ENCODE measurements at regions of chr19 and their contacts with region 1.

Region 1: GRCh38 chr19:18058208-18059030 is 28.3 kb downstream of the IL12RB1 start:
- DNase-seq: peak; percentile 63 to 86 (median 80)
- H3K4me3 ChIP-seq: peak overlapping the region; percentile 12
- H3K27ac ChIP-seq: no peak overlapping the region
- H3K4me1 ChIP-seq: no peaks in the 10 kb centered on the region
- H3K27me3 ChIP-seq: no peaks in the 10 kb centered on the region
- CTCF ChIP-seq: peak; percentile 83 to 92 (median 87)
- EP300 ChIP-seq: no peak
- POLR2A ChIP-seq: no peak

Region 2: GRCh38 chr19:18007044-18007916 is 51.1 kb before region 1 on chr19:
- intact Hi-C with region 1: loop called in 3 of 4 experiments (anchors 2 kb)
- DNase-seq: peak; percentile 73 to 90 (median 79)
- H3K4me3 ChIP-seq: peak overlapping the region; percentile 43
- H3K27ac ChIP-seq: peak overlapping the region; percentile 17 to 60
- H3K4me1 ChIP-seq: peaks cover 5% of the 10 kb centered on the region
- H3K27me3 ChIP-seq: no peaks in the 10 kb centered on the region
- CTCF ChIP-seq: peak; percentile 91 to 94 (median 93)
- EP300 ChIP-seq: no peak
- POLR2A ChIP-seq: no peak

Region 3: GRCh38 chr19:18017275-18018083 is 40.9 kb before region 1 on chr19:
- intact Hi-C with region 1: loop called in 1 of 4 experiments (anchors 5 kb)
- DNase-seq: no peak
- H3K4me3 ChIP-seq: no peak overlapping the region
- H3K27ac ChIP-seq: no peak overlapping the region
- H3K4me1 ChIP-seq: peaks cover 7% of the 10 kb centered on the region
- H3K27me3 ChIP-seq: no peaks in the 10 kb centered on the region
- CTCF ChIP-seq: no peak
- EP300 ChIP-seq: no peak
- POLR2A ChIP-seq: no peak

Region 4: GRCh38 chr19:18043676-18044075 is 14.7 kb before region 1 on chr19:
- intact Hi-C with region 1: no loop called
- DNase-seq: no peak
- H3K4me3 ChIP-seq: no peak overlapping the region
- H3K27ac ChIP-seq: no peak overlapping the region
- H3K4me1 ChIP-seq: no peaks in the 10 kb centered on the region
- H3K27me3 ChIP-seq: no peaks in the 10 kb centered on the region
- CTCF ChIP-seq: no peak
- EP300 ChIP-seq: no peak
- POLR2A ChIP-seq: no peak

Region 5: DNA sequence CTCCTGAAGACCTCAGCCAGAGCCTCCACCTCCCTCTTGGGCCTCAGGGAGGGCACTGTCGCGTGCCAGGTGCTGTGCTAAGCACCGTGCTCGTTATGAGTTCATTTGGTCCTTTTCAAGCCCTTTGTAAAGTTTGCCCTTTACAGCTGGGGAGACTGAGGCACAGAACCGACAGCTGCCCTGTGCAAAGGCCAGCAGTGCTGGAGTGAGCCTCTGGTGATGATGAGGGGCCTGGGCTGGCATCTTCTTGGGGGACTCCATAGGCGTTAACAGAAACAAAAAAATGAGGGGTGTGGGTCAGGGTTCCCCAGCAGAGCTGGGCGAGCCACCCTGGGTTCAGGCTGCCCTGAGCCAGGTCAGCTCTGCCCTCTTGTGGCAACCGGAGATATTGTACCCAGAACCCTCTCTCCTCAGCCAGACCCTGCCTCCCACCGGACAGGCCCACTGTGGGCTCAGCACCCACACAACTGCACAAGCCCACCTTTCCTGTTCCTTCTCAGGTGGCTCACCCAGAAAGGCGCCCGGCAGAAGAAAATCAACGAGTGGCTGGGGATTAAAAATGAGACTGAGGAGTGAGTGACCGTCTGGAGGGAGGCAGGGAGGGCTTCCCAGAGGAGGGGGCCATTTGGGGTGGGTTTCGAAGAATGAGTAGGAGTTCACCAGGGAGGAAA is 109.7 kb after region 1 on chr19:
- intact Hi-C with region 1: no loop called
- DNase-seq: peak in 2 of 5 donors; percentile 50 to 56
- H3K4me3 ChIP-seq: no peak overlapping the region
- H3K27ac ChIP-seq: no peak overlapping the region
- H3K4me1 ChIP-seq: peaks cover 7% of the 10 kb centered on the region
- H3K27me3 ChIP-seq: no peaks in the 10 kb centered on the region
- CTCF ChIP-seq: peak; percentile 12 to 63 (median 57)
- EP300 ChIP-seq: no peak
- POLR2A ChIP-seq: no peak

Measured in ovary (tissue), 10 donors.